ENCODE measurements at regions of chr14 and their contacts with region 1.

Region 1: GRCh38 chr14:89040460-89041259 is 216.2 kb downstream of the TTC8 start:
- DNase-seq: peak; percentile 87 to 90
- ATAC-seq: peak; percentile 86 to 99 (median 95)
- H3K4me3 ChIP-seq: peak overlapping the region in 9 of 10 donors; percentile 24 to 60 (median 51)
- H3K27ac ChIP-seq: peak overlapping the region; percentile 67 to 84 (median 78)
- H3K4me1 ChIP-seq: peaks cover 0 to 16% (median 11%) of the 10 kb centered on the region in 9 donors
- H3K27me3 ChIP-seq: peaks cover 0 to 6% (median 0%) of the 10 kb centered on the region in 7 donors
- CTCF ChIP-seq: peak; percentile 80 to 99 (median 95)

Region 2: DNA sequence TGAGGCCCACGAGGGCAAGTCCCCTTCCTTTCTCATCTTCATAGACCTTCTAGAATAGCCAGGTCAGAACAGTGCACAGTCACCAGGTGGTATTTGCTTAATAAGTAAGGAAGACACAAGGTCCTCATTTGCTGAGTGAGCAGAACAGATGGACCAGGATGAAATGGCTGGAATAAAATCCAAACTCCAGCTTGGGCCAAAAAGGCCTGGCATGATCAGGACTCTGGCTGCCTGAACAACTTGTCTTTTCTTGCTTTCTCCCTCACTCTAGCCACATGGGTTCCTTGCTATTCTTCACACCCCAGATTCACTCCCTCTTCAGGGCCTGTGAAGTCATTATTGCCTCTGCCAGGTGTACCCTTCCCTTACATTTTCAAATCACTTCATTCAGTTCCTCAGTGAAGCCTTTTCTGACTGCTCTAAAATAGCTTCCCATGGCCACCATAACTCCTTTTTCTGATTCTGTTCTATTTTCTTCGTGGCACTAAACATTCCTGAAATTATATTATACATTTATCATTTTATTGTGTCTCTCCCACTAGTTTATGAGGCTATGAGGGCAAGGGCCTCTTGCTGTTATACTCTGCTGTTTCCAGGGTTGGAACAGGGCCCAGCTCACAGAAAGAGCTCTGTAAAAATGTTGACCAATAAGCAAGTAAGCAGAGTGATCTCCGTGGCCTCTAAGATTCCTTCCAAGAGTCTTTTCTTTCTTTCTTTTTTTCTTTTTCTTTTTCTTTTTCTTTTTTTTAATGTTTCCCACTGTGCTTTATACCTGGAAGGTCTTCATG is 65.4 kb before region 1 on chr14:
- intact Hi-C with region 1: no loop called
- DNase-seq: no peak
- ATAC-seq: no peak
- H3K4me3 ChIP-seq: no peak overlapping the region
- H3K27ac ChIP-seq: no peak overlapping the region
- H3K4me1 ChIP-seq: no peaks in the 10 kb centered on the region
- H3K27me3 ChIP-seq: peaks cover 0 to 32% (median 10%) of the 10 kb centered on the region in 7 donors
- CTCF ChIP-seq: no peak

Region 3: DNA sequence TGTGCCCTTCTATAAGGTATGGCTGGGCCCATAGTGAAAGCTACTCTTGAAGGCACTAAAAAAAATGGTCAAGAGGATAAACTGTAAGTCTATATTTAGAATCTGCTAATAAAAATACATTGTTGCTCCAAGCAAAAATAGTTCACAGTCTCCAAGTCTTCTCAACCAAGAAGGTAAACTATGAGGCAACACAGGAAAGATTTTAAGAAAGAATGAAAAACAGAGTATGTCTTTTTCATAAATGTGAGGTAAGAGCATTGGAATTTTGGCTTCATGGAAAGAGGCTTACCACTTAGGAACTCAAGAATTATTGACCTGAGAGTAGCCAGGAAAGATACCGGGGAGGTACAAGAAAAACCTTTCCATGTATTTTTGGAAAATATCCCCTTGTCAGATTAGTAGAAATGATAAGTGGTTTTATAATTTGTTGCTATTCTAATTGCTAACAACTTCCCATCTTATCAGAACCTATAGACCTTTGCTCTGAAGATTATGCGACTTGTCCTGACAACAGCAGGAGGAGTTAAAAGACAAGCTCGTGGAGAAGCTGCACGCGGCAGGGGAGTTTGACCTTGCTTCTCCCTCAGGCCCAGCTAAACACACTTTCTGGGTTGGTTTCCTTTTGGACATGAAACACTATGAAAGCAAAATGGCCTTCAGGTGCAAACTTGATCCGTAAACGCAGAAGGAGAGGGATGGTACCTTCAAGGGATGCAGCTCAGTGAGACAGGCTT is 138.3 kb after region 1 on chr14:
- intact Hi-C with region 1: loop called in 1 of 10 experiments (anchors 10 kb)
- DNase-seq: no peak
- ATAC-seq: no peak
- H3K4me3 ChIP-seq: no peak overlapping the region
- H3K27ac ChIP-seq: peak overlapping the region in 1 of 10 donors; percentile 12
- H3K4me1 ChIP-seq: peaks cover 0 to 46% (median 23%) of the 10 kb centered on the region in 9 donors
- H3K27me3 ChIP-seq: no peaks in the 10 kb centered on the region
- CTCF ChIP-seq: no peak

Region 4: DNA sequence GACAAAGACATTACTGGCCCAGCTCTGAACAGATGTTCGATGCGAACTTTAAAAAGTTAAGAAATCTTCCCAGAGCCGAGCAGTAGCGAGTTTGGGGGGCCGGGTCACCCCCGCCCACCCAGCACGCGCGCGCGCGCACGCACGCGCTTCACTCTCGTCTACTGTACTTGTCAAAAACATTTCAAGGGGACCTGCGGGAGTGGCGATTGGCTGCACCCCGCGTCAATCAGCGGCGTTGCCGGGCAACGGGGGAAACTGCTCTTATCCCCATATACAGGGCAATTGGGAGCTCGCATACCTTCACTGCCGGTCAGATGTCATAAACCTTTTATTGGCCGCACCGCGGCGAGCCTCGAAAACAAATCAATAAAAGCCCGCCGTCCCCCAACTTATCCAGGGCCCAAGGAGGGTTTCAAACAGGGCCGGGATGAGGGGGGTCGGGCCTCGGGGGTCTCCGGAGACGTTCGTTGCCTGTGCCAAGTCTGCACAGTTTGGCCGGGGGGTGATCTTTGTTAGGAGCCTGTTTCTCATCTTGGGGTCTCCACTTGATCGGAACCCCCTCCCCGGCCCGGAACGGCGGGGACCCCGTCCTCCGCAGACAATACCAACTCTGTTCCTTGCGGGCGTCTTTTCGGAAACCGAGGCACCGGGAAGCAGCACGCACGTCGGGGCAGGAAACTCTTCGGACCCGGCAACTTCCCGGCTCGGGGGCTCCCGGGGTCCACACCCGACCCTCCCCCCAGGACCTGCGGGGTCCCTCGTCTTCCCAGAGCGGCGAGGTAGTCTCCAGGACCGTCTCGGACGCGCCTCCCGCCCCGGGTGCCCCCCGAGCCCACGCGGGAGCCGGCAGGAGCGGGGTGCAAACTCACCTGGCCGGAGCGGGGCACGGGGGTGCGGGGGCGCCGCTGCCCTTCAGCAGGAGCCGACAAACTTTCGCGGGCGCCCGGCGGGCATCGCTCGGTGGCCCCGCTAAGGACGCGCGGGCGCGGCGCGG is 375.6 kb after region 1 on chr14:
- intact Hi-C with region 1: loop called in 8 of 10 experiments (anchors 1 to 10 kb)
- DNase-seq: peak; percentile 99 to 100
- ATAC-seq: peak; percentile 85 to 94 (median 90)
- H3K4me3 ChIP-seq: peak overlapping the region; percentile 70 to 98 (median 92)
- H3K27ac ChIP-seq: peak overlapping the region; percentile 92 to 97 (median 96)
- H3K4me1 ChIP-seq: peaks cover 9 to 49% (median 33%) of the 10 kb centered on the region in 9 donors
- H3K27me3 ChIP-seq: no peaks in the 10 kb centered on the region
- CTCF ChIP-seq: no peak

Region 5: GRCh38 chr14:89625244-89625713 is 584.6 kb after region 1 on chr14:
- intact Hi-C with region 1: loop called in 1 of 10 experiments (anchors 10 kb)
- DNase-seq: peak; percentile 46 to 52
- ATAC-seq: peak; percentile 34 to 76 (median 44)
- H3K4me3 ChIP-seq: peak overlapping the region in 1 of 10 donors; percentile 11
- H3K27ac ChIP-seq: peak overlapping the region in 2 of 10 donors; percentile 11 to 17
- H3K4me1 ChIP-seq: peaks cover 4 to 21% (median 13%) of the 10 kb centered on the region in 9 donors
- H3K27me3 ChIP-seq: no peaks in the 10 kb centered on the region
- CTCF ChIP-seq: no peak

Region 6: DNA sequence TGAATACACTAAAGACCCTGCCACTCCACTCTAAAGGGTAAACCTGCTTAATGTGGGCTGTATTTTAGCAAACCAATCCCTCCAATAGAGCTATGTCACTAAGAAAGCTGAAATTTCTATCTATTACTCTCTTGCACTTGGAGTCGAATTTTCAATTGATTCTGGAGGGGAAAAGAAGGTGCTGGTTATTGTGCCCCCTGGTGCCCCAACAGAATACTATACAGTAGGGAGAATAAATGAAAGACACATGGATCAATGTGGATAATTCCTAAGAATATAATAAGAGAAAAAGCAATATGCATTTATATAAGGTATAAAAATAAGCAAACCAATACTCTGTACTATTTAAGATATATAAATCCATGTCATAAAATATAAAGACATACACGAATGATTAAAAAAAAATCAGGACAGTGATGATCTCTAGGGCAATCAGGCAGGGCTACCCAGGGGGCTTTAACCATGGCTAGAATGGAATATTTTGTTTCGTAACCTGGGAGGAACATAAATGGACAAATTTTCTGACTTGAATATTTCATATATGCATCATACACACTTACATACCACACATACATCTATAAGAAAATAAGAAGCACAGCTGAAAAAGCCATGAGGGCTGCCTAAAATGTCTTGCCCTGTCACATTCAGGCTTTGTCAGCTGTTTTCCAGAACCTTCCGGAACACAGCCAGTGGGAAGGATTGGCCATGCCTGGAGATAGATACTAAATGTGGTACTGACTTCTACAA is 859.4 kb after region 1 on chr14:
- intact Hi-C with region 1: loop called in 4 of 10 experiments (anchors 5 kb)
- DNase-seq: no peak
- ATAC-seq: peak in 1 of 8 donors; percentile 53
- H3K4me3 ChIP-seq: no peak overlapping the region
- H3K27ac ChIP-seq: no peak overlapping the region
- H3K4me1 ChIP-seq: peaks cover 0 to 12% (median 0%) of the 10 kb centered on the region in 9 donors
- H3K27me3 ChIP-seq: no peaks in the 10 kb centered on the region
- CTCF ChIP-seq: peak in 8 of 9 donors; percentile 29 to 69 (median 60)